Calu3 (cell line): ENCODE measurements at regions of chr5 and their contacts with region 1.

Region 1: DNA sequence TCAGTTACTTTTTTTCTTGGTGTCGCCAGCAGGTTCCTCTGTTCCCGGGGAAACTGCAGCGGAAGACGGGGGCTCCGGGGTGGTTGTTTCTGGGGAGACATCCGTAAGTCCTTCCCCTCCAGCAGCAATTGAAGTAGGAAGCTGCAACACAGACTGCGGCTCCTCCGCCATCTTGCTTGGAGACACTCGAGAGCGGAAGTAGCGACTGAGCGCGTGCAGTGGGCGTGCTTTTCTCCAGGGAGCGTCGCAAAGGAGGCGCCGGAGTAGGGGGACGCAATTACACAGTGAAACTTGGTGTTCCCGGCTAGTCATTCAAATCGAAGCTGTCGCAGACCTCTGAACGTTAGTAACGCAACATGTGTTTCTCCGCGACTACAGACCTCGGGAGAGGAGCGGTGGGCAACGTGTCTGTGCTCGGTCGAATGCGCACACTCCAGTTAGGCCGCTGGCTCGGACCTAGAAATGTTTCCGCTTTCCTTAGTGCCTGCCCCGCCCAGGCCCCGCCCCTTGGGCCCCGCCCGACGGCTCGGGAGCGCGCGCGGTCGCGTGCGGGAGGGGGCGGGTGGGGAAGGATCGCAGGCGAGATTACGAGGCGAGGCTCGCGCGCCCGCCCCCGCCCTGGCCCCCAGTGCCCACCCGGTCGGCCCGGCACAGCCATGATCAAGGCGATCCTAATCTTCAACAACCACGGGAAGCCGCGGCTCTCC is at the starts of genes AP3S1 and ATG12:
- DNase-seq: peak; percentile 96
- H3K4me3 Mint-ChIP-seq: peak within 1 kb of the TSS; percentile 87
- H3K27ac Mint-ChIP-seq: peak within 1 kb of the TSS; percentile 87
- H3K4me1 Mint-ChIP-seq: peaks cover 31% of the 10 kb centered on the region
- H3K27me3 Mint-ChIP-seq: no peaks in the 10 kb centered on the region
- CTCF ChIP-seq: no peak
- total RNA-seq, gene AP3S1: 87.4 and 101 TPM in 2 replicates
- total RNA-seq, gene ATG12: 60.5 and 62.7 TPM in 2 replicates

Region 2: GRCh38 chr5:115309751-115310370 is 531.7 kb before region 1 on chr5:
- CTCF ChIA-PET with region 1: interaction called, 3 read pairs
- intact Hi-C with region 1: loop called (anchors 5 kb)
- DNase-seq: no peak
- H3K4me3 Mint-ChIP-seq: no peak overlapping the region
- H3K27ac Mint-ChIP-seq: no peak overlapping the region
- H3K4me1 Mint-ChIP-seq: peaks cover 21% of the 10 kb centered on the region
- H3K27me3 Mint-ChIP-seq: no peaks in the 10 kb centered on the region
- CTCF ChIP-seq: peak; percentile 63

Region 3: DNA sequence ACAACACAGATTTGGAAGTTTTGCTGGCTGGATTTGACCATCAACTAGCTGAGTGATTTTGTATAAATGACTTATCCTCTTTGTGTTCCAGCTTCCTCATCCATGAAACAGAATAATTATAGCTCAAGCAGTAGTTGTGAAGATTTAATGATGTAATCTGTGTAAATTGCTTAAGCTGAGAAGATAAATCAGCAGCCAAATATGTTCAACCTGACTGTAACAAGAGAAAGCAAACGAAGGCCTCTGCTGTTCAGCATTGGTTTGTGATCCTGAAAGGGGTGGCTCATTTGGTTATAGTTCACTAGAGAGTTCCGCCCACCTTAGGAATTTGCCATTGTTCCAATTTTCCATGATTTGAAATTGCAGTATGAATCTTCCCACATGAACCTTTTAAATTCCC is 469.4 kb before region 1 on chr5:
- CTCF ChIA-PET with region 1: no interaction called
- intact Hi-C with region 1: loop called (anchors 5 kb)
- DNase-seq: no peak
- H3K4me3 Mint-ChIP-seq: no peak overlapping the region
- H3K27ac Mint-ChIP-seq: no peak overlapping the region
- H3K4me1 Mint-ChIP-seq: peaks cover 33% of the 10 kb centered on the region
- H3K27me3 Mint-ChIP-seq: no peaks in the 10 kb centered on the region
- CTCF ChIP-seq: no peak

Region 4: DNA sequence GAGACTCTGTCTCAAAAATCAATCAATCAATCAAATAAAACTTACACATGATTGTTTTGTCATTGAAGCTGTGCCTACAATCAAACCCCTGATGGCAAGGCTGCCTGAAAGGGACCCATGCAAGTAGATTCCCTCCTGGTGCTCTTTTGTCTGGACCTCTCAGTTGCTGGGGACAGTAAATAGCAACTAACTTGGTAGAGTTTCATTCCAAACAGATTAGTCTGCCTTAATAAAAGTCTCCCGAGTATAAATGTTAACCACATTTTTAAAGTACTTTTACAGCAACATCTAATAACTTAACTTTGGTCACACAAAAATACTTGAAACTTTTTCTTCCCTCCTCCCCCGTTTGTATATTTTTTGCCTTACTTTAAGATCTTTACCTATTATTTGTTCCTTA is 402.5 kb before region 1 on chr5:
- CTCF ChIA-PET with region 1: no interaction called
- intact Hi-C with region 1: no loop called
- DNase-seq: no peak
- H3K4me3 Mint-ChIP-seq: no peak overlapping the region
- H3K27ac Mint-ChIP-seq: no peak overlapping the region
- H3K4me1 Mint-ChIP-seq: peaks cover 45% of the 10 kb centered on the region
- H3K27me3 Mint-ChIP-seq: no peaks in the 10 kb centered on the region
- CTCF ChIP-seq: no peak

Region 5: GRCh38 chr5:115544436-115545350 is 296.8 kb before region 1 on chr5 and contains the start of gene FEM1C:
- CTCF ChIA-PET with region 1: no interaction called
- intact Hi-C with region 1: loop called (anchors 5 kb)
- DNase-seq: peak; percentile 99
- H3K4me3 Mint-ChIP-seq: peak within 1 kb of the TSS; percentile 80
- H3K27ac Mint-ChIP-seq: peak within 1 kb of the TSS; percentile 78
- H3K4me1 Mint-ChIP-seq: peaks cover 15% of the 10 kb centered on the region
- H3K27me3 Mint-ChIP-seq: no peaks in the 10 kb centered on the region
- CTCF ChIP-seq: no peak
- total RNA-seq, gene FEM1C: 42.8 and 45.9 TPM in 2 replicates

Region 6: GRCh38 chr5:115634343-115635132 is 207.0 kb before region 1 on chr5:
- CTCF ChIA-PET with region 1: interaction called, 8 read pairs
- intact Hi-C with region 1: loop called (anchors 1 kb)
- DNase-seq: peak; percentile 91
- H3K4me3 Mint-ChIP-seq: peak overlapping the region; percentile 36
- H3K27ac Mint-ChIP-seq: peak overlapping the region; percentile 68
- H3K4me1 Mint-ChIP-seq: no peaks in the 10 kb centered on the region
- H3K27me3 Mint-ChIP-seq: no peaks in the 10 kb centered on the region
- CTCF ChIP-seq: peak; percentile 86

Region 7: GRCh38 chr5:115785381-115786065 is 56.0 kb before region 1 on chr5:
- CTCF ChIA-PET with region 1: no interaction called
- intact Hi-C with region 1: no loop called
- DNase-seq: no peak
- H3K4me3 Mint-ChIP-seq: no peak overlapping the region
- H3K27ac Mint-ChIP-seq: no peak overlapping the region
- H3K4me1 Mint-ChIP-seq: no peaks in the 10 kb centered on the region
- H3K27me3 Mint-ChIP-seq: peaks cover 3% of the 10 kb centered on the region
- CTCF ChIP-seq: no peak

Region 8: GRCh38 chr5:116013207-116013785 is 171.8 kb after region 1 on chr5:
- CTCF ChIA-PET with region 1: no interaction called
- intact Hi-C with region 1: no loop called
- DNase-seq: no peak
- H3K4me3 Mint-ChIP-seq: no peak overlapping the region
- H3K27ac Mint-ChIP-seq: no peak overlapping the region
- H3K4me1 Mint-ChIP-seq: no peaks in the 10 kb centered on the region
- H3K27me3 Mint-ChIP-seq: no peaks in the 10 kb centered on the region
- CTCF ChIP-seq: no peak

Region 9: GRCh38 chr5:116032094-116032517 is 190.6 kb after region 1 on chr5 and contains the start of gene ARL14EPL:
- CTCF ChIA-PET with region 1: interaction called, 3 read pairs
- intact Hi-C with region 1: loop called (anchors 2 kb)
- DNase-seq: peak; percentile 83
- H3K4me3 Mint-ChIP-seq: no peak within 1 kb of the TSS
- H3K27ac Mint-ChIP-seq: peak within 1 kb of the TSS; percentile 55
- H3K4me1 Mint-ChIP-seq: no peaks in the 10 kb centered on the region
- H3K27me3 Mint-ChIP-seq: no peaks in the 10 kb centered on the region
- CTCF ChIP-seq: no peak
- total RNA-seq, gene ARL14EPL: 0.66 and 1.2 TPM in 2 replicates

Region 10: DNA sequence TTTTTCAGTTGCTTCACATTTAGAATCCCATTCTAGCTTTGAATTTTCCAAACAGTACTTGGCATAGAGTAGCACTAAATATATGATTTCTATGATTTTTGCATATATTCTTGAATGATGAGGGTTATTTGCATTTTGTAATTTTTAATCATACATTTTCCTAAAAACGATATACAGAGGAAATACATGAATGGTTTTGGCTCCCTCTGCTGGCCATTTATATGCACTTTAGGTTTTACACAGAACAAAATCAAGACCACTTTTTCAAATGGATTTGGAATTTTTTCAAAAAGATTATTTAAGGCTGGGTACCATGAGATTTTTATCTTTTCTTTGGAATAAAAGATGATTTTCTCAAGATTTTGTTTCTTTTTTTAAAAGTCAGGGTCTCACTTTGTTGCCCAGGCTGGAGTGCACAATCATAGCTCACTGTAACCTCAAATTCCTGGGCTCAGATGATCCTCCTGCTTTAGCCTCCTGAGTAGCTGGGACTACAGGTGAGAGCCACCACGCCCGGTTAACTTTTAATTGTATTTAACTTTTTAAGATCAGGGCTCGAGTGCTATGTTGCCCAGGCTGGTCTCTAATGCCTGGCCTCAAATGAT is 226.6 kb after region 1 on chr5:
- CTCF ChIA-PET with region 1: interaction called, 4 read pairs
- intact Hi-C with region 1: loop called (anchors 5 kb)
- DNase-seq: peak; percentile 44
- H3K4me3 Mint-ChIP-seq: no peak overlapping the region
- H3K27ac Mint-ChIP-seq: no peak overlapping the region
- H3K4me1 Mint-ChIP-seq: no peaks in the 10 kb centered on the region
- H3K27me3 Mint-ChIP-seq: no peaks in the 10 kb centered on the region
- CTCF ChIP-seq: peak; percentile 67